ENCODE measurements at regions of chr20 and their contacts with region 1.

Region 1: GRCh38 chr20:58650776-58651558 is at the start of gene STX16:
- DNase-seq: peak; percentile 94
- H3K4me3 ChIP-seq: peak within 1 kb of the TSS; percentile 98
- H3K27ac ChIP-seq: peak within 1 kb of the TSS; percentile 74
- H3K4me1 ChIP-seq: peaks cover 42% of the 10 kb centered on the region
- CTCF ChIP-seq: peak; percentile 88
- total RNA-seq, gene STX16: 48.2 and 50.5 TPM in 2 replicates

Region 2: GRCh38 chr20:57879779-57880570 is 771.0 kb before region 1 on chr20:
- CTCF ChIA-PET with region 1: no interaction called
- POLR2A ChIA-PET with region 1: no interaction called
- intact Hi-C with region 1: no loop called
- DNase-seq: no peak
- H3K4me3 ChIP-seq: no peak overlapping the region
- H3K27ac ChIP-seq: no peak overlapping the region
- H3K4me1 ChIP-seq: no peaks in the 10 kb centered on the region
- CTCF ChIP-seq: no peak

Region 3: GRCh38 chr20:58669287-58670006 is 18.5 kb after region 1 on chr20:
- CTCF ChIA-PET with region 1: no interaction called
- POLR2A ChIA-PET with region 1: interaction called, 11 read pairs
- intact Hi-C with region 1: no loop called
- DNase-seq: peak; percentile 76
- H3K4me3 ChIP-seq: peak overlapping the region; percentile 24
- H3K27ac ChIP-seq: peak overlapping the region; percentile 79
- H3K4me1 ChIP-seq: peaks cover 26% of the 10 kb centered on the region
- CTCF ChIP-seq: no peak

Region 4: DNA sequence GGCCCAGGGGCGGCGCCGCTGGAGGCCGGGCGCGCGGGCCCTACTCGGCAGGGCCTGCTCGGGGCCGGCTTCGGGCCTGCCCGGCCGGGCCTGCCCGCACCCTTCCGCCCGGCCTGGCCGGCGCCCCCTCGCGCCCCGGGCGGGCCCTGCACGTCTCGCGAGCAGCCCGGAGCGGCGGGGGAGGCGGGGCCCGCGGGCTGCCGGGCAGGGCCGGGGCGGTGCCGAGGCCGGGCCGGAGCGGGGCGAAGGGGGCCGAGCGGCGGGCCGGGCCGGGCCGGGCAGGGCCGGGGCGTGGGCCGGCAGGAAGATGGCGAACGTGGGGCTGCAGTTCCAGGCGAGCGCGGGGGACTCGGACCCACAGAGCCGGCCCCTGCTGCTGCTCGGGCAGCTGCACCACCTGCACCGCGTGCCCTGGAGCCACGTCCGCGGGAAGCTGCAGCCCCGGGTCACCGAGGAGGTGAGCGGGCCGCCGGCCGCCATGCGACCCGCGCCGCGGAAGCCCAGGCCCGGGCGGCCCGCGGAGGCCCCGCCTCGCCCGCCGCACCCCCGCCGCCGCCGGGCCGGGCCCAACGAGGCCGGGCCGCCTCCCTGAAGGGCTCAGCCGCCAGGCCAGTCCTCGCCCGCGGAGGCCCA is 41.7 kb after region 1 on chr20 and contains the start of gene NPEPL1:
- CTCF ChIA-PET with region 1: no interaction called
- POLR2A ChIA-PET with region 1: interaction called, 3 read pairs
- intact Hi-C with region 1: loop called (anchors 5 kb)
- DNase-seq: peak; percentile 67
- H3K4me3 ChIP-seq: no peak within 1 kb of the TSS
- H3K27ac ChIP-seq: no peak within 1 kb of the TSS
- H3K4me1 ChIP-seq: no peaks in the 10 kb centered on the region
- CTCF ChIP-seq: no peak
- total RNA-seq, gene NPEPL1: 3.4 and 4.7 TPM in 2 replicates

Region 5: DNA sequence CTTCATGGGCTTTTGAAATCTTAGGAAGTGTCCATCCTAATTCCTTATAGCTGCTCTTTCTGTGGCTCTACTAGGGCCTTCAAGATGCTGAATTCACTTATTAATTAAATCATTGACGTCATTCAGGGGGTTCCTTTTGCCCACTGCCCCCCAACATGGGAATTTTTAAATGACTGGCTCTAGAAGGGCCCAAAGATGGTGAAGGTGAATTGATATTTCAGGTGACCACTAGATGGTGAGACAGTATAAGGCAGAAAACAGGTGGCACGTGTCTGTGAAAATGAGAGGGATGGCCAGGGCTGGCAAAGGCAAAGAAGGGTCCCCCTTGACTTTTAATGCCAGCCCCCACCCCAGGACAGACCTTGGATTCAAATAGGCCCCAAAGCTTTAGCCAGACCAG is 213.4 kb after region 1 on chr20:
- CTCF ChIA-PET with region 1: no interaction called
- POLR2A ChIA-PET with region 1: interaction called, 5 read pairs
- intact Hi-C with region 1: loop called (anchors 5 kb)
- DNase-seq: peak; percentile 46
- H3K4me3 ChIP-seq: no peak overlapping the region
- H3K27ac ChIP-seq: no peak overlapping the region
- H3K4me1 ChIP-seq: no peaks in the 10 kb centered on the region
- CTCF ChIP-seq: peak; percentile 76

Measured in OCI-LY7 (cell line).